ENCODE measurements at regions of chr15 and their contacts with region 1.

Region 1: DNA sequence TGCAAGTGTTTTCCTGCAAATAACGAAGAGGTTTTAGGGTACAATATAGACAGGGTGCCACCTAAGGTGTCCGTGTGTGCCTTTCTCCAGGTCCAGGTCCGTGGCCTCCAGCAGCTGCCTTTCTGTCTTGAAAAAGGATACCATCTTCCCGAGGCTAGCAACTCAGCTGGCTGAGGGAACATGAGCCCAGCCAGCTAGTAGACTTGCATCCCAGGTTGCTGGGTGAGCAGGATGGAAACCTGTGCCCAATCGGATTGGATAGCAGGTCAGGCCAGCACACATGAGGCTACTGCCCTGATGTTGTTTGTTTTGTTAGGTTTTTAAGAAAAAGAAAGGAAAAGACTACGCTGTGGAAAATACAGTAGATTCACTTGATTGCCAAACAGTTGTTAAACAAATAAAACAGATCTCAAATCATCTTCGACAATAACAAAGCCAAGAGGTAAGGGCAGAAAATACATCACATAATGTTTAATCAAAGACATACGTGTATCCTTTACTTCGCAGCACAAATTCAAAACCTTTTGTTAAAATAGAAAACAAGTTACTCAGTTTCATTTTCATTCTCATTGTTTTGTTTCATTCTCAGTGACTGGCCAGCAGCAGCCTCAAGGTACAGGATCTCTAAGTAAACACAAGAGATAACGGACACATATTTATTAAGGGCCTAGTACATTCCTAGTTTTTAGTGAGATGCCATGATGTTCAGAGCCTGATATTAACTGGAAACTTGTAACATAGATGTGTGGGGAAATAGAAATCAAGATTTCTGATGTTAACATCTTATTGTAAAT is 661.2 kb upstream of the NR2F2 start:
- DNase-seq: peak; percentile 35
- ATAC-seq: peak; percentile 88
- H3K4me3 ChIP-seq: peak overlapping the region; percentile 4; the same call in 1 of the 2 replicates
- H3K27ac ChIP-seq: peak overlapping the region; percentile 28
- H3K4me1 ChIP-seq: no peaks in the 10 kb centered on the region
- H3K27me3 ChIP-seq: no peaks in the 10 kb centered on the region
- CTCF ChIP-seq: no peak
- EP300 ChIP-seq: no peak
- POLR2A ChIP-seq: no peak
- RAD21 ChIP-seq: no peak

Region 2: DNA sequence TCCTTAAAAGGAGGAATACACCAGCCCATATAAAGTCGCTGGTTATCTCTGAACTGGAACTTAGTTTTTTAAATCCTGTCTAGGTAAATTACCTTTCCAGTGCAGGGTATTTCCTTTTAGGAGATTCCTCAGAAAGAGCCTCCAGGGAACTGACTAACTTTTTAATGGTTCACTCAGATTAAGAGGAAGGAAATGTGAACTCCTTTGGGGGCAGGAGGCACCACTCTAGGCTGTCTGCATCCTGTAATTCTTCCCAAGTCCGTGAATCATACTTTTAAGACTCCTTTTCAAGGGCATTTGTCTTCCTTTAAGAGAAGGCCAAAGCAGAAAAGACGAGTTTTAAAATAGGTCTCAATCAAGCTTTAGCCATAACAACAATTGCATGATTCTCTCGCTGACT is 210.1 kb before region 1 on chr15:
- CTCF ChIA-PET with region 1: no interaction called
- POLR2A ChIA-PET with region 1: no interaction called
- RAD21 ChIA-PET with region 1: no interaction called
- SMC1A ChIA-PET with region 1: no interaction called
- in situ Hi-C with region 1: no loop called
- intact Hi-C with region 1: no loop called
- DNase-seq: no peak
- ATAC-seq: no peak
- H3K4me3 ChIP-seq: no peak overlapping the region
- H3K27ac ChIP-seq: no peak overlapping the region
- H3K4me1 ChIP-seq: no peaks in the 10 kb centered on the region
- H3K27me3 ChIP-seq: no peaks in the 10 kb centered on the region
- CTCF ChIP-seq: no peak
- EP300 ChIP-seq: no peak
- POLR2A ChIP-seq: no peak
- RAD21 ChIP-seq: no peak

Region 3: GRCh38 chr15:95653361-95653805 is 16.0 kb before region 1 on chr15:
- CTCF ChIA-PET with region 1: interaction called, 6 read pairs
- POLR2A ChIA-PET with region 1: interaction called, 3 read pairs
- RAD21 ChIA-PET with region 1: no interaction called
- SMC1A ChIA-PET with region 1: interaction called, 11 read pairs
- in situ Hi-C with region 1: no loop called
- intact Hi-C with region 1: no loop called
- DNase-seq: no peak
- ATAC-seq: no peak
- H3K4me3 ChIP-seq: no peak overlapping the region
- H3K27ac ChIP-seq: no peak overlapping the region
- H3K4me1 ChIP-seq: no peaks in the 10 kb centered on the region
- H3K27me3 ChIP-seq: no peaks in the 10 kb centered on the region
- CTCF ChIP-seq: no peak
- EP300 ChIP-seq: no peak
- POLR2A ChIP-seq: no peak
- RAD21 ChIP-seq: no peak